ENCODE measurements at regions of chr17 and their contacts with region 1.

Region 1: DNA sequence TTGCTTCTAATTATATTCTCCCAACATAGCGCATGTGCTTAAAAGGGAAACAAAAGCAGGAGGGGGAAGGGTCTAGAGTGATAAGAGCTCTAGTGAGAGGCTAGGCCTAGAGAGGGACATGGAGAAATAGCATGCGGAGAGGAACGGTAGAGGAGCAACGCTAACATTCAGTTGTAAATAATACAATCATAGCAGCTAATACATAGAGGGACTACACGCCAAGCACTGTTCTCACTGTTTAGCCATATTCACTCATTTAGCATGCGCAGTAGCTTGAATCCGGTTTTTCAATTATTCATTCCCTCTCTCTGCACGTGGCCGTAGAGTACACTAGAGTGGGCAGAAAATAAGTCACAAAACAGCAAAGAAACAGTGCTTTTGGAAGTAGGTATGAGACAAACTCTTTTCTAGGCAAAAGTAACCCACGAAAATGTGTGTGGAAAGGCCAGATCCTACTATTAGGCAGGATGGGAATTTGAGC is 1.7 kb upstream of the ALOX12 start:
- DNase-seq: no peak
- H3K4me3 ChIP-seq: no peak overlapping the region
- H3K27ac ChIP-seq: no peak overlapping the region
- H3K4me1 ChIP-seq: peaks cover 0 to 3% of the 10 kb centered on the region in 2 experiments; a peak in 1 of 4 replicates
- H3K27me3 ChIP-seq: no peaks in the 10 kb centered on the region
- CTCF ChIP-seq: no peak
- EP300 ChIP-seq: no peak
- RAD21 ChIP-seq: no peak

Region 2: GRCh38 chr17:7021993-7022778 is 28.0 kb after region 1 on chr17:
- CTCF ChIA-PET with region 1: interaction called, 11 read pairs
- POLR2A ChIA-PET with region 1: no interaction called
- DNase-seq: peak; percentile 92
- H3K4me3 ChIP-seq: peak overlapping the region in 1 of 2 experiments; percentile 47; a peak in 2 of 4 replicates
- H3K27ac ChIP-seq: no peak overlapping the region
- H3K4me1 ChIP-seq: peaks cover 5 to 30% of the 10 kb centered on the region in 2 experiments; a peak in 2 of 4 replicates
- H3K27me3 ChIP-seq: no peaks in the 10 kb centered on the region
- CTCF ChIP-seq: peak; percentile 81
- EP300 ChIP-seq: no peak
- RAD21 ChIP-seq: peak; percentile 74

Region 3: DNA sequence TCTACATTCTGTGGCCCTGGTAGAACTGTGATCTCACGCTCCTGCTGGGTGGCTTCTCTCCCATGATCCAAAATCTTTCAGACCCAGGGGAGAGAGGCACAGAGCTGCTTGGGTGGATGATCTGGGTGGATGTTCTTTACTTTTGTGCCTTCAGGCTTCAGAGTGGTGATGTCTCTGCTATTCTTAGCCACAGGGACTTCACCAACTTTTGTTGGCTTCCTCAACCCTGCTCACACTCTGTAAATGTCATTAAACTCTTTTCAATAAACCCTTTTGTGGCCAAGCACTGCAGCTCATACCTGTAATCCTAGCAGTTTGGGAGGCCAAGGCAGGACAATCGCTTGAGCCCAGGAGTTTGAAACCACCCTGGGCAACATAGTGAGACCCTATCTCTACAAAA is 78.2 kb after region 1 on chr17:
- CTCF ChIA-PET with region 1: no interaction called
- POLR2A ChIA-PET with region 1: no interaction called
- DNase-seq: no peak
- H3K4me3 ChIP-seq: no peak overlapping the region
- H3K27ac ChIP-seq: no peak overlapping the region
- H3K4me1 ChIP-seq: no peaks in the 10 kb centered on the region
- H3K27me3 ChIP-seq: peaks cover 40% of the 10 kb centered on the region
- CTCF ChIP-seq: no peak
- EP300 ChIP-seq: no peak
- RAD21 ChIP-seq: no peak

Measured in SK-N-SH (cell line).